CD4-positive, alpha-beta T cell (primary cell): ENCODE measurements at regions of chr9 and their contacts with region 1.

Region 1: GRCh38 chr9:108885643-108886348 is 23.7 kb downstream of the ACTL7A start:
- DNase-seq: peak in 1 of 14 experiments; percentile 6
- ATAC-seq: no peak
- H3K4me3 ChIP-seq: no peak overlapping the region
- H3K4me3 Mint-ChIP-seq: no peak overlapping the region
- H3K27ac ChIP-seq: no peak overlapping the region
- H3K27ac Mint-ChIP-seq: no peak overlapping the region
- H3K4me1 ChIP-seq: no peaks in the 10 kb centered on the region
- H3K4me1 Mint-ChIP-seq: no peaks in the 10 kb centered on the region
- H3K27me3 ChIP-seq: no peaks in the 10 kb centered on the region
- H3K27me3 Mint-ChIP-seq: no peaks in the 10 kb centered on the region
- CTCF ChIP-seq: no peak

Region 2: GRCh38 chr9:108400297-108401064 is 485.3 kb before region 1 on chr9:
- CTCF ChIA-PET with region 1: no interaction called
- POLR2A ChIA-PET with region 1: no interaction called
- intact Hi-C with region 1: no loop called
- DNase-seq: no peak
- ATAC-seq: no peak
- H3K4me3 ChIP-seq: no peak overlapping the region
- H3K4me3 Mint-ChIP-seq: no peak overlapping the region
- H3K27ac ChIP-seq: no peak overlapping the region
- H3K27ac Mint-ChIP-seq: no peak overlapping the region
- H3K4me1 ChIP-seq: no peaks in the 10 kb centered on the region
- H3K4me1 Mint-ChIP-seq: no peaks in the 10 kb centered on the region
- H3K27me3 ChIP-seq: no peaks in the 10 kb centered on the region
- H3K27me3 Mint-ChIP-seq: no peaks in the 10 kb centered on the region
- CTCF ChIP-seq: no peak

Region 3: DNA sequence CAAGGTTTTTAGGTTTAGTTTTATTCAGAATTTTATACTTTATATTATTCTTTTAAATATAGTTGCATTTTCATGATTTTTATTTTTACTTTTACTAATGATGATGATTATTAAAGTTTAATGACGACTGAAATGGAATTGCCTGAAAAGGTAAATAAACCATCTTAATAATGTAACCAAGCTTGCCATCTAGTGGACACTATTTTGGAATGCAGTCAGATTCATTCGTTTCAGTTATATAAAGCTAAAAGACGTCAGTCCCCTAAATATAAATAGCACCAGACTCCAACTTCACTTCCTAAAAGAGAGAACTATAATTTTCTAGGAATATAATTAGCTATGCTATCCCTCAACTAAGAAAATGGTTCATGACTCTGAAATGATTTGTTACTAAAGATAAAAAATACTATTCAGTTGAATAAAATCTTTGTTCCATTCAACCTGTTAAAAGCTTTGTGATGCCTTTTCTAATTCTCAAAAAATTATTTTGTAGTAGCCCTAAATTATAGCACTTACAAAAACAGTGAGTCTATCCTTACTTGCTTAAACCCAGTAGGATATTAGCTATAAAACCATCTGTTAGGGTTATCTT is 68.3 kb after region 1 on chr9:
- CTCF ChIA-PET with region 1: no interaction called
- POLR2A ChIA-PET with region 1: no interaction called
- intact Hi-C with region 1: loop called in 1 of 2 experiments (anchors 5 kb)
- DNase-seq: peak in 3 of 14 experiments; percentile 49 to 65 (median 62)
- ATAC-seq: no peak
- H3K4me3 ChIP-seq: no peak overlapping the region
- H3K4me3 Mint-ChIP-seq: no peak overlapping the region
- H3K27ac ChIP-seq: no peak overlapping the region
- H3K27ac Mint-ChIP-seq: no peak overlapping the region
- H3K4me1 ChIP-seq: no peaks in the 10 kb centered on the region
- H3K4me1 Mint-ChIP-seq: no peaks in the 10 kb centered on the region
- H3K27me3 ChIP-seq: no peaks in the 10 kb centered on the region
- H3K27me3 Mint-ChIP-seq: no peaks in the 10 kb centered on the region
- CTCF ChIP-seq: peak; percentile 72

Region 4: GRCh38 chr9:108978205-108978604 is 92.4 kb after region 1 on chr9:
- CTCF ChIA-PET with region 1: no interaction called
- POLR2A ChIA-PET with region 1: no interaction called
- intact Hi-C with region 1: no loop called
- DNase-seq: no peak
- ATAC-seq: no peak
- H3K4me3 ChIP-seq: no peak overlapping the region
- H3K4me3 Mint-ChIP-seq: no peak overlapping the region
- H3K27ac ChIP-seq: no peak overlapping the region
- H3K27ac Mint-ChIP-seq: no peak overlapping the region
- H3K4me1 ChIP-seq: no peaks in the 10 kb centered on the region
- H3K4me1 Mint-ChIP-seq: no peaks in the 10 kb centered on the region
- H3K27me3 ChIP-seq: no peaks in the 10 kb centered on the region
- H3K27me3 Mint-ChIP-seq: no peaks in the 10 kb centered on the region
- CTCF ChIP-seq: no peak

Region 5: GRCh38 chr9:109198736-109199379 is 313.1 kb after region 1 on chr9:
- CTCF ChIA-PET with region 1: no interaction called
- POLR2A ChIA-PET with region 1: no interaction called
- intact Hi-C with region 1: loop called in 1 of 2 experiments (anchors 5 kb)
- DNase-seq: peak in 4 of 14 experiments; percentile 6 to 35 (median 20)
- ATAC-seq: no peak
- H3K4me3 ChIP-seq: no peak overlapping the region
- H3K4me3 Mint-ChIP-seq: no peak overlapping the region
- H3K27ac ChIP-seq: no peak overlapping the region
- H3K27ac Mint-ChIP-seq: no peak overlapping the region
- H3K4me1 ChIP-seq: no peaks in the 10 kb centered on the region
- H3K4me1 Mint-ChIP-seq: no peaks in the 10 kb centered on the region
- H3K27me3 ChIP-seq: peaks cover 0 to 6% of the 10 kb centered on the region in 2 experiments
- H3K27me3 Mint-ChIP-seq: peaks cover 11% of the 10 kb centered on the region
- CTCF ChIP-seq: peak; percentile 31

Region 6: DNA sequence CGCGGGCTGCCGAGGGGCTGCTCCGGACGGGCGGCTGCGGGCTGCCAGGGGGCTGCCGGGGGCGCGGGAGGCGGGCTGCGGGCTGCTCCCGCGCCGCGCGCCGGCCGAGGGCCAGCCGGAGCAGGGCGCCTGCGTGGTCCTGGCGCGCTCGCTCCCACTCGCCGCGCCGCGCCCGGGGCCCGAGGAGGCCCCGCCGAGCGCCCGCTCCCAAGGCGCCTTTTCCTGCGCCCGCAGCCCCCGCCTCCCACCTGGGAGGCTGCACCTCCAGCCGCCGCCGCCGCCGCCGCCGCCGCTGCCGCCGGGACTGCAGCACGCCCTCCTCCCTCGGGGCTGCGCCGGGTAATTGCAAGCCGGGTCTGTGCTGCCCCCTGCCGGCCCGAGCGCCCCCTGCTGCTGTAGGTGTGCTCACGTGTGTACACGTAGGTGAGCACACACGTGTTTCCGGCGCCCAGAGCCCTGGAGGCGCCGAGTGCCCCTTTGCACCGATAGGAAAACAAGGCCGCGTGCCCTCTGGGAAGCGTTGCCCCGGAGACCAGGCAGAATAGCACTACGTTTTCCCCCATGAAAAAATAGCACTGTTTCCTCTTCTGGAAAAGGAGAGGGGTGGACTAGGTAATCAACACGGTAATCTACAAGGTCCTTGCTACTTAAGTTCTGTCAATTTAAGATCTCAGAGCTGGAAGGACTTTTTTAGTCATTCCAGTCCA is 435.1 kb after region 1 on chr9 and contains the start of gene EPB41L4B:
- CTCF ChIA-PET with region 1: no interaction called
- POLR2A ChIA-PET with region 1: no interaction called
- intact Hi-C with region 1: loop called in 1 of 2 experiments (anchors 2 kb)
- DNase-seq: peak; percentile 77 to 89 (median 82)
- ATAC-seq: peak; percentile 98
- H3K4me3 ChIP-seq: no peak within 1 kb of the TSS
- H3K4me3 Mint-ChIP-seq: peak within 1 kb of the TSS; percentile 86
- H3K27ac ChIP-seq: no peak within 1 kb of the TSS
- H3K27ac Mint-ChIP-seq: no peak within 1 kb of the TSS
- H3K4me1 ChIP-seq: peaks cover 12% of the 10 kb centered on the region
- H3K4me1 Mint-ChIP-seq: peaks cover 15% of the 10 kb centered on the region
- H3K27me3 ChIP-seq: peaks cover 42 to 49% of the 10 kb centered on the region in 2 experiments
- H3K27me3 Mint-ChIP-seq: peaks cover 73% of the 10 kb centered on the region
- CTCF ChIP-seq: peak; percentile 73
- total RNA-seq, gene EPB41L4B: not detected